ENCODE measurements at regions of chr9 and their contacts with region 1.

Region 1: GRCh38 chr9:88593537-88594185 is 58.7 kb downstream of the NXNL2 start:
- DNase-seq: peak; percentile 74
- ATAC-seq: peak; percentile 90
- H3K4me3 ChIP-seq: no peak overlapping the region
- H3K27ac ChIP-seq: no peak overlapping the region
- H3K4me1 ChIP-seq: no peaks in the 10 kb centered on the region
- H3K27me3 ChIP-seq: no peaks in the 10 kb centered on the region
- CTCF ChIP-seq: peak; percentile 83
- POLR2A ChIP-seq: no peak
- RAD21 ChIP-seq: peak; percentile 87

Region 2: DNA sequence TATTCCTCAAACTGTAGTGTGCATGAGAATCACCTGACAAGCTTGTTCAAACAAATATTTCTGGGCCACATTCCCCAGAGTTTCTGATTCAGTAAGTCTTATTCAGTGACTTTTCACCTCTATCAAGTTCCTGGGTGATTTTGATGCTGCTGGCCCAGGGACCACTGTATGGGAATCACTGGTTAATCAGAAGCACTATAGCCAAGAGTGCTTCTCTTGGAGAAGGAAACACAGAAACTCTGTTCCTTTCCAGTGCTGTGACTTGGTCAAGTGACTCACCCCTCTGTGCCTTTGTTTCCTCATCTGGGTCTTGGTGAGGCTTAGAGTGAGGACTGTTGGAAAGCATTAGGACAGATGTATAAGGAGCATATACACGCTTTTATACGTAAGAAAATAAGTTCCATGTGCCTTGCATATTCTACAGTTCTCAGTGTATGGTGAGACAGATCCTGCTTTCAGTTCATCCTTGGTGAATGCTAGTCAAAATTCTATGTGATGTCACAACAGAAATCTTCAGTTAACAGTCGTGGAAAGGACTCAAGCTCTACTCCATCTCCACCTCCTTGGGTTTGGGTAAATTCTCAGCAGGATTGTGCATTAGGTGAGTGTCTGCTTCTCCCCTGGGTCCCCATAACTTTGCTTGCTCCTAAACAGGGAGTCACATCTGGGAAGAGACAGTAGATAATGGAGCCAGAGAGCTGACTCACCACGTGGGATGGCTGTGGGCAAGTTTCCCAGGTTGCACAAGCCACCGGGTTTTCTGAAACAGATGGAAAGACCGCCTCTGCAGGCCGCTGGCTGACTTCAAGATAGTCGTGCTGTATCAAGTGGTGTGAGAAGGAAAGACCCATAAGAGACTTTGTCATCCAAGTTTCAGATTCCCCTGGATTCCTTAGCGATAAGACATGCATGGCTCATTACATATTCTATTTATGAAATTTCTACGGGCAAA is 58.3 kb after region 1 on chr9:
- CTCF ChIA-PET with region 1: no interaction called
- POLR2A ChIA-PET with region 1: no interaction called
- dilution Hi-C with region 1: no loop called
- in situ Hi-C with region 1: no loop called
- intact Hi-C with region 1: loop called (anchors 2 kb)
- DNase-seq: peak; percentile 99
- ATAC-seq: peak; percentile 89
- H3K4me3 ChIP-seq: no peak overlapping the region; the same call in 1 of the 2 replicates
- H3K27ac ChIP-seq: peak overlapping the region; percentile 89
- H3K4me1 ChIP-seq: peaks cover 17% of the 10 kb centered on the region
- H3K27me3 ChIP-seq: no peaks in the 10 kb centered on the region
- CTCF ChIP-seq: peak; percentile 54
- POLR2A ChIP-seq: peak; percentile 51
- RAD21 ChIP-seq: peak; percentile 44

Region 3: DNA sequence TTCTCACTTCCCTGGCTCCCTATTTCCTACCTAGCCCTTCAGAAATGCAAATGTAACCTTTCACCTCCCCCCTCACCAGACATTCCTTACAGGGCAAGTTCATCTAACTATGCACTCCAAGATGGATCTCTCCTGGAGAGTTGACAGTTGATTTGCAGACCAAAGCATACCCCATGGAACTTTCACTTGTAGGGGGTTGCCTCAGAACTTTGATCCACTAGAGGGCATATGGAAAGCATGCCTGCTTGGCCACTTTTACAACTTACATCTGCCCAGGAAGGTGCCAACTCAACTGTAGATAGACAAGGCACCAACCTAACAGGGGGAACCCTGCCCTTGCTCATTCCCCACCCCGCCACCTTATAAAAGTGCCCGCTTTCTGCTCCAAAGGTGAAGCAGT is 129.1 kb after region 1 on chr9:
- CTCF ChIA-PET with region 1: no interaction called
- POLR2A ChIA-PET with region 1: no interaction called
- dilution Hi-C with region 1: no loop called
- in situ Hi-C with region 1: no loop called
- intact Hi-C with region 1: loop called (anchors 5 kb)
- DNase-seq: peak; percentile 26
- ATAC-seq: peak; percentile 60
- H3K4me3 ChIP-seq: no peak overlapping the region
- H3K27ac ChIP-seq: no peak overlapping the region
- H3K4me1 ChIP-seq: peaks cover 5% of the 10 kb centered on the region; the same call in 1 of the 2 replicates
- H3K27me3 ChIP-seq: no peaks in the 10 kb centered on the region
- CTCF ChIP-seq: peak; percentile 45
- POLR2A ChIP-seq: no peak
- RAD21 ChIP-seq: peak; percentile 63

Region 4: DNA sequence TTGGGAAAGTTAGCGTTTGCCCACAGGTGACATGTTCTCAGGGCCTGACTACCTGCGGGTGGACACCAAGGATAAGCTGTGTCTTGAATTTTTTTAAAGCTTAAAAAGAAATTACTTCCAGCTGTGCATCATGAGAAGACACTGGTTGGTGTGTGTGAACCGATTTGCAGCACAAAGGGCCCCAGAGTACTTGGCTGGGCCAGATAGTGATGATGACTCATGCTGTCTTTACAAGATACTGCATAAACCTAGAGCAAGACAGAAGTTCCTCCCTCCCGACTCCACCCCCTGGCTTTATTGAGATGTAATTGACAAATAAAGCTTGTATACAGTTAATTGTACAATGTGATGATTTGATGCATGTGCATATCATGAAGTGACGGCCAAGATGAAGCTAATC is 154.1 kb after region 1 on chr9:
- CTCF ChIA-PET with region 1: interaction called, 3 read pairs
- POLR2A ChIA-PET with region 1: no interaction called
- dilution Hi-C with region 1: no loop called
- in situ Hi-C with region 1: no loop called
- intact Hi-C with region 1: loop called (anchors 5 kb)
- DNase-seq: peak; percentile 96
- ATAC-seq: peak; percentile 50
- H3K4me3 ChIP-seq: no peak overlapping the region
- H3K27ac ChIP-seq: peak overlapping the region; percentile 93
- H3K4me1 ChIP-seq: peaks cover 35% of the 10 kb centered on the region
- H3K27me3 ChIP-seq: no peaks in the 10 kb centered on the region
- CTCF ChIP-seq: no peak
- POLR2A ChIP-seq: no peak
- RAD21 ChIP-seq: peak; percentile 10; the same call in 1 of the 2 replicates

Region 5: GRCh38 chr9:88775037-88775471 is 181.4 kb after region 1 on chr9:
- CTCF ChIA-PET with region 1: no interaction called
- POLR2A ChIA-PET with region 1: no interaction called
- dilution Hi-C with region 1: no loop called
- in situ Hi-C with region 1: no loop called
- intact Hi-C with region 1: loop called (anchors 5 kb)
- DNase-seq: peak; percentile 98
- ATAC-seq: peak; percentile 76
- H3K4me3 ChIP-seq: no peak overlapping the region
- H3K27ac ChIP-seq: peak overlapping the region; percentile 82
- H3K4me1 ChIP-seq: peaks cover 36% of the 10 kb centered on the region
- H3K27me3 ChIP-seq: no peaks in the 10 kb centered on the region
- CTCF ChIP-seq: no peak
- POLR2A ChIP-seq: no peak
- RAD21 ChIP-seq: no peak

Region 6: GRCh38 chr9:88936668-88937067 is 343.0 kb after region 1 on chr9:
- CTCF ChIA-PET with region 1: no interaction called
- POLR2A ChIA-PET with region 1: no interaction called
- dilution Hi-C with region 1: no loop called
- in situ Hi-C with region 1: no loop called
- intact Hi-C with region 1: no loop called
- DNase-seq: peak; percentile 7
- ATAC-seq: no peak
- H3K4me3 ChIP-seq: no peak overlapping the region
- H3K27ac ChIP-seq: no peak overlapping the region
- H3K4me1 ChIP-seq: no peaks in the 10 kb centered on the region; the same call in 1 of the 2 replicates
- H3K27me3 ChIP-seq: peaks cover 12% of the 10 kb centered on the region
- CTCF ChIP-seq: no peak
- POLR2A ChIP-seq: no peak
- RAD21 ChIP-seq: no peak

Region 7: GRCh38 chr9:89278997-89279739 is 685.5 kb after region 1 on chr9:
- CTCF ChIA-PET with region 1: no interaction called
- POLR2A ChIA-PET with region 1: no interaction called
- dilution Hi-C with region 1: no loop called
- in situ Hi-C with region 1: loop called (anchors 10 kb)
- intact Hi-C with region 1: loop called (anchors 10 kb)
- DNase-seq: peak; percentile 71
- ATAC-seq: peak; percentile 39; the same call in 1 of the 2 replicates
- H3K4me3 ChIP-seq: no peak overlapping the region
- H3K27ac ChIP-seq: no peak overlapping the region
- H3K4me1 ChIP-seq: peaks cover 7% of the 10 kb centered on the region; the same call in 1 of the 2 replicates
- H3K27me3 ChIP-seq: no peaks in the 10 kb centered on the region
- CTCF ChIP-seq: peak; percentile 75
- POLR2A ChIP-seq: no peak
- RAD21 ChIP-seq: peak; percentile 72

Region 8: DNA sequence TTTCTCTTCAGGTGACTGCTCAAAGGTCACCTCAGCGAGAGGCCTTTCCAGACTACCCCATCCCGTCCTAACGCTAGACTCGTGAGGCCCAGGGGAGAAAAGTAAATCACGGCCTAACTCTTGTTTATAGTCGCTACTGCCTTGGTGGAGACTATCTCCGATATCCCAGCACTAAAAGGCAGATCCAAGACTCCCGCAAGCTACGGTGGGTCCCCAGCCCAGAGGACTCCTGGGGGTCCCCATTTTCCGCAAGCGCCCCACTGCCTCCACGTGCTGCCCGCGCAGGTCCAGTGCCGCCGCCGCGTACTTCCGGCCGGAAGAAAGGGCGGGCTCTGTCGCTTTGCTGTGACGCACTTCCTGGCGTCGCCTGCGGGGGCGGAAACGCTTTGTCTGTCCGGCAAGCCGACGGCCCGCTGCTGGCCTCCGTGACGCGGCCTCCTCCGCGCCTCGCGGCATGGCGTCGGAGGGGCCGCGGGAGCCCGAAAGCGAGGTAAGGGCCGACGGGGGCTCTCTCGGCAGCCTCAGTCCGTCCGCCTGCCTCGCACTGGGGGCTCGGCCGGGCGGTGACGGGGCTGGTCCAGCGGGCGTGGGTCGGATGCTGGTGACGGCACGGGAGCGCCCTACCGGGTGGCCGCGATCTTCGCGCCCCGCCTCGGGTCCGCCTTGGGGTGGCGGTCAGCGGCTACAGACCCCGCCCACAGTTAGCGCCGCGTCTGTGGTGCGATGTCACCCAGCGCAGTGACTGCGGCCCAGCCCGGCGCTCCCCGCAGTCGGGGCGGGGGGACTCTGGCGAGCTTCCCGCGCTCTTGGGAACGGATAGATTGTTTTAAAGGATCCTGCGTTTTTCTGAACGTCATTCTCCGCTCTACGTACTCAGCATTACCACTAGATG is 724.7 kb after region 1 on chr9 and contains the start of gene SECISBP2:
- CTCF ChIA-PET with region 1: no interaction called
- POLR2A ChIA-PET with region 1: no interaction called
- dilution Hi-C with region 1: no loop called
- in situ Hi-C with region 1: no loop called
- intact Hi-C with region 1: loop called (anchors 10 kb)
- DNase-seq: peak; percentile 97
- ATAC-seq: peak; percentile 97
- H3K4me3 ChIP-seq: peak within 1 kb of the TSS; percentile 79
- H3K27ac ChIP-seq: peak within 1 kb of the TSS; percentile 95
- H3K4me1 ChIP-seq: peaks cover 3% of the 10 kb centered on the region
- H3K27me3 ChIP-seq: no peaks in the 10 kb centered on the region
- CTCF ChIP-seq: peak; percentile 88
- POLR2A ChIP-seq: peak; percentile 98
- RAD21 ChIP-seq: peak; percentile 58
- total RNA-seq, gene SECISBP2: 18.8 and 19.7 TPM in 2 replicates